Left ventricle myocardium inferior (tissue), 1 donor: ENCODE measurements at regions of chr3 and their contacts with region 1.

Region 1: DNA sequence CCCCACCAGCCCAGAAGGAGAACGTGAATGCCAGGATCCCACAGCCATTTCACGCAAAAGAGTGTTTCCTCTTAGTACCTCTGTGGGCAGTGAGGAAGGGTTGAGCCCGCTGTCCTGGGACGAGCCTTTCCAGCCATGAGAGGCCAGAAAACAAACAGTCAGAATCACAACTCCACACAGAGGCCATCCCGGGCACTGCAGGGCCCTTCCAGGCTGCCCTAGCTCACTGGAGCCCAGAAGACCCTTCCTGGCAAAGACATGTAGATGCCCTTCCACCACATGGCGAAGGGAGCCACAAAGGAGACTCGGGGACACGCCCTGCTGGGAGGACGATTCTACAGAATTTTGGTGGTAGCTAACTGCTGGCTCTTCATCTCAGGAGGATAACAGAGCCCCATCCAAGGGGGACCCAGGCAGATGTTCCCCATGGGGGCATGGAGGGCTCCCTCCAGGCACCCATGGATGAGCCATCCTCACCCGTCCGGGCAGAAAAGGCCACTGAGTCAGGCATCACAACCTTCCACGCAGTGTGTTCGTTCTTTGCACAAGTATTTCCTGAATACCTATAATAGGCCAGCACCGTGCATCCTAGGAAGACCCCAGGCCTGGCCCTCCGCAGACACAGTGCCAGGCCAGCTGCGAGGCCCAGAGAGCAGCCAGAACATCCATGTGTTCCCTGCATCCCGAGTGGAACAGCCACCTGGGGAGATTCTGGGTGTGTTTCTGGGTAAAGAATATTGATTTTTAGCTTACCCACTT is 47.2 kb downstream of the SLC12A8 start:
- DNase-seq: peak; percentile 53
- H3K4me3 ChIP-seq: no peak overlapping the region
- H3K27ac ChIP-seq: no peak overlapping the region
- H3K4me1 ChIP-seq: peaks cover 42% of the 10 kb centered on the region
- H3K27me3 ChIP-seq: no peaks in the 10 kb centered on the region
- CTCF ChIP-seq: peak; percentile 89

Region 2: GRCh38 chr3:124905849-124906248 is 259.5 kb before region 1 on chr3:
- intact Hi-C with region 1: no loop called
- DNase-seq: no peak
- H3K4me3 ChIP-seq: no peak overlapping the region
- H3K27ac ChIP-seq: no peak overlapping the region
- H3K4me1 ChIP-seq: peaks cover 6% of the 10 kb centered on the region
- H3K27me3 ChIP-seq: no peaks in the 10 kb centered on the region
- CTCF ChIP-seq: no peak

Region 3: DNA sequence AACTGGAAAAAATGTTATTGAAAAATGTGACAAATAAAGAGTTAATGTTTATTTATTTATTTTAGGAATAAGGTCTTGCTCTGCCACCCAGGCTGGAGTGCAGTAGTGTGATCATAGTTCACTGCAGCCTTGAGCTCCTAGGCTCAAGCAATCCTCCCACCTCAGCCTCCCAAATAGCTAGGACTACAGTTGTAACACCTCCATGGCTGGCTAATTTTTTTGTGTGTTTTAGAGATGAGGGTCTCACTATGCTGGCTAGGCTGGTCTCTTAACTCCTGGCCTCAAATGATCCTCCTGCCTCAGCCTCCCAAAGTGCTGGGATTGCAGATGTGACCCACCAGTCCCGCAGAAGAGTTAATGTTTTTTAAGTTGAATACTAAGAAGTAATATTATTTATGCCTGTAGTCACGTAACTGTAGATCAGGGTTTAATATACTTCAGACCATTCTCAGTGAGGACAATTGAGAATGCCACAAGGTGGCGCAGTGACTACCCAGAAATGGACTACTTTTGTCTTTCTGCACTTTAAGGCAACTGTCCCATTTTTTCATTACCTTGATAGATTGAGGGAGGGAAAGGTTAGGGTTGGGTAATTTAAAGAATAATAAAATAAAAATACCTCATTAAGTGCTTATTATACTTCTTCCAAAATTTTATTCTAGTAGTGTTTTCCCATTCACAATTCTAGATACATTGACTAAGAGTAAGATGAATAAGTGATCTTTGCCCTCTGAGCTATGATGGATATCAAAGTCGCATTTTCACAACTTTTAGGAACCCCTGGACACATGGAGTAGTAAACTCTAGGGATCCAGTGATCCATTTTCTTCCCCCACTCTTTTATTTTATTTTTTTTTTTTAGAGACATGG is 236.8 kb before region 1 on chr3:
- intact Hi-C with region 1: loop called (anchors 10 kb)
- DNase-seq: peak; percentile 56
- H3K4me3 ChIP-seq: no peak overlapping the region
- H3K27ac ChIP-seq: no peak overlapping the region
- H3K4me1 ChIP-seq: peaks cover 3% of the 10 kb centered on the region
- H3K27me3 ChIP-seq: no peaks in the 10 kb centered on the region
- CTCF ChIP-seq: peak; percentile 84